ENCODE measurements at regions of chr6 and their contacts with region 1.

Region 1: DNA sequence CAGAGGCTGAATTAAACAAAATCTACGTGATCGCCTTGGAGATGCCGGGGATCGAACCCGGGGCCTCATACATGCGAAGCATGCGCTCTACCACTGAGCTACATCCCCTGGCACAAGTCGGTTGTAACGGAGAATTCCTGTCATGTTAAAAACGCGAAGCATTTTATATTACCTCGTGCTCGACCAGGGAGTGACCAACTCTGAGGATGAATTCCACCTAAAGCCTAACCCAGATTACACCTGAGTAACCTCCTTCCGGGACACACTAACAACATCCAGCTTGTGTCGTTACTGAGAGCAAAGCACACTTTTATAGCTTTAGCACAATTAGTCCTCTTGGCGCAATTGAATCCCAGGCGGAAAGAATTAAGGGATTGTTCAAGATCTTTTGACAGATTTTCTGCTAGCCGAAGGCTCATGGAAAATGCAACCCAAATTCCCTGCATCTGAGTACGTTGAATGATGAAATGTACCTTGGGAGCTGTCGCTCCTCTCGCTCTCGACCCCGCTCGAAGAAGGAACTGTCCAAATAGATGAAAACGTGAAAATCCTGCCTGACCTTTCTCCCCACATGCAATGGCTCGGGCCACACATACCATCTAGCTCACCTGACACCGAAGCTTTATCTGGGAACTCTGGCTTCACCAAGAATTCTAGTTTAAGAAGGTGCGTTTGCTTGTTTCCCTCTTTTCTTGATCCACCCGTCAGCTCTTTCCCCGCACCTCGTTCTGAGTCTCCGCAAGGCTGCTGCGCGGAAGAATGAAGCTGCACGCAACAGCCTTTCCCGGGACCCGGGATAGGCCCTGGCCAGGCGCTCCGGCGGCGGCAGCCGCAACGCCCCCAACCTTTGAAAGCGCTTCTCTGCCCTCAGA is 148.4 kb downstream of the GPX5 start:
- DNase-seq: peak; percentile 75
- ATAC-seq: peak; percentile 86
- H3K4me3 ChIP-seq: peak overlapping the region; percentile 46 to 70 (median 57)
- H3K27ac ChIP-seq: no peak overlapping the region
- H3K4me1 ChIP-seq: peaks cover 30% of the 10 kb centered on the region
- H3K27me3 ChIP-seq: no peaks in the 10 kb centered on the region; a peak in 1 of 5 replicates
- CTCF ChIP-seq: no peak
- EP300 ChIP-seq: no peak
- POLR2A ChIP-seq: no peak
- RAD21 ChIP-seq: no peak

Region 2: DNA sequence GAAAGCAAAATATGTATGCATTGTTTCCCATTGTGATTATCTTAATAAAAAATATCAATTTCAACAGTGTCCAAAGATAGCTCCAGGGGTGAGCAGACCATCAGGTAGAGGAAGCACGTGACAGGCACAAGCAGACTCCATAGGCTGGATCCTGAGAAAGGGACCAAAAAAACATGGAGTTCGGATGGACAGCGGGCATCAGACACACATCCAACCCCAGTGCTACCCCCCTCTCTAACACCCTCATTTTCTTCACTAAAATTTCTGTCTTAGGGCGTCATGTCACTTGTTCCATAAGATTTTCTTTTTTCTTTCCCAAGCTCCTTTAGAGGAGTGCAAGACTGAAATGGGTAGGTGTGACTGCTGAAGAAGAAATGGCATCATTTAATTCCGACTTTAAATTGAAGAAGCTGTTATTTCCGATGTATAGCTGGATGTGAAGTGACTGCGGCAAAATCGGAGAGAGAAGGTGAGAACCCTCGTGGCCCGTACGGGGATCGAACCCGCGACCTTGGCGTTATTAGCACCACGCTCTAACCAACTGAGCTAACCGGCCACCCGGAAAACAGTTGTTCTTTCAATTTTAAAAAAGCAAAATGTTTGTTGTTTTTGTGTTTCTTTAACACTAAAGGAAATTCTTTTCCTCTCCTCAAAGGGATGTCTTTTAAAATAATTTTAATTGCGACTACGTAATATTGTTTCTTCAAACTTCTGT is 1436.8 kb before region 1 on chr6:
- CTCF ChIA-PET with region 1: no interaction called
- POLR2A ChIA-PET with region 1: no interaction called
- in situ Hi-C with region 1: no loop called
- intact Hi-C with region 1: no loop called
- DNase-seq: peak; percentile 27
- ATAC-seq: peak; percentile 47
- H3K4me3 ChIP-seq: peak overlapping the region in 2 of 3 experiments; percentile 19 to 43; a peak in 2 of 6 replicates
- H3K27ac ChIP-seq: no peak overlapping the region
- H3K4me1 ChIP-seq: peaks cover 31% of the 10 kb centered on the region
- H3K27me3 ChIP-seq: no peaks in the 10 kb centered on the region
- CTCF ChIP-seq: no peak
- EP300 ChIP-seq: no peak
- POLR2A ChIP-seq: no peak
- RAD21 ChIP-seq: no peak

Region 3: GRCh38 chr6:28657769-28658465 is 16.1 kb before region 1 on chr6:
- CTCF ChIA-PET with region 1: no interaction called
- POLR2A ChIA-PET with region 1: no interaction called
- in situ Hi-C with region 1: no loop called
- intact Hi-C with region 1: loop called (anchors 2 kb)
- DNase-seq: peak; percentile 61
- ATAC-seq: peak; percentile 91
- H3K4me3 ChIP-seq: peak overlapping the region; percentile 59 to 72 (median 65)
- H3K27ac ChIP-seq: no peak overlapping the region
- H3K4me1 ChIP-seq: peaks cover 29% of the 10 kb centered on the region
- H3K27me3 ChIP-seq: peaks cover 1 to 16% of the 10 kb centered on the region in 2 experiments; a peak in 2 of 5 replicates
- CTCF ChIP-seq: no peak
- EP300 ChIP-seq: no peak
- POLR2A ChIP-seq: no peak
- RAD21 ChIP-seq: no peak

Region 4: DNA sequence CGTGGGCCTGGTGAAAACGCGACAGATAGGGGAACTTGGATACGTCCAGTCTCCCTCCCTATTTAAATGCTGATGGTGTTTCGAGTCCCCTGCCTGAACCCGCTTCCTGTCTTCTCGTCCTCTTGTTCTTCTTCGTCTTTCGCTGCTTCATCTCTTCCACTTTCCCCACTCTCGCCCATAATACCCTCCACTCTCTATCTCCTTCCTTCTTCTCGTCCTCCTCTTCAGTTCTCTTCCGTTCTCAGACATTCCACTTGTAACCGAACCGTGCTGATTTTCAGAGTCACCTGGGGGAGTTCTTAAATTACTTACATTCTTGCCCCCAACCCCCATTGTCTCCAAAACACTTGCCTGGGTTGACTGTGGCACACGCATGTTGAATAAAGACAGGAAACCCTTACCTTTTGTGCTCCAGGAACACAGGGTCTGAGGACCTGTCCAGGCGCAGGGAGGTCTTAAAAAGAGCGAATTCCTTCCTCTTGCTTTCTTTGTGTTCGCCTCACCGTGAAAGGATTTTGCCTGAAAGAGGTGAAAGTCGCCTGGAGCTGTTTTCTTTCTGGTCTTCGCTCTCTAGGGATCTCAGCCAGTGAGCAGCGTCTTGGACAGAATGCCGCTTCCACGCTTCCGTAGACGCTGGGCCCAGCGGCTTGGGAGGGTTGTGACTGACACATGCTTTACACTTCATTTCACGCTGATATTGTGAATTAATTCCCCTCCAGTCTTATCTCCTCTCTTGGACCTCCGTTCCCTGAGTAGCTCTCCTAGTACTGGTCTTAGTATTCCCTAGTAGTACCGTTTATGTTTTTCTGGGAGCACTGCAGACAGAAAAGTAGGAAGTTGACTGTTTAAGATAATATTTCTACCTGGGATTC is 35.7 kb after region 1 on chr6:
- CTCF ChIA-PET with region 1: no interaction called
- POLR2A ChIA-PET with region 1: no interaction called
- in situ Hi-C with region 1: no loop called
- intact Hi-C with region 1: loop called (anchors 1 kb)
- DNase-seq: no peak
- ATAC-seq: peak; percentile 43
- H3K4me3 ChIP-seq: peak overlapping the region; percentile 37 to 55 (median 44)
- H3K27ac ChIP-seq: no peak overlapping the region
- H3K4me1 ChIP-seq: peaks cover 20% of the 10 kb centered on the region
- H3K27me3 ChIP-seq: no peaks in the 10 kb centered on the region; a peak in 2 of 5 replicates
- CTCF ChIP-seq: no peak
- EP300 ChIP-seq: no peak
- POLR2A ChIP-seq: no peak
- RAD21 ChIP-seq: no peak

Region 5: GRCh38 chr6:29649701-29650673 is 976.0 kb after region 1 on chr6:
- CTCF ChIA-PET with region 1: no interaction called
- POLR2A ChIA-PET with region 1: no interaction called
- in situ Hi-C with region 1: no loop called
- intact Hi-C with region 1: no loop called
- DNase-seq: peak; percentile 96
- ATAC-seq: peak; percentile 96
- H3K4me3 ChIP-seq: peak overlapping the region; percentile 39 to 71 (median 43)
- H3K27ac ChIP-seq: no peak overlapping the region
- H3K4me1 ChIP-seq: peaks cover 6% of the 10 kb centered on the region; the same call in 1 of the 2 replicates
- H3K27me3 ChIP-seq: no peaks in the 10 kb centered on the region; a peak in 1 of 5 replicates
- CTCF ChIP-seq: peak; percentile 94
- EP300 ChIP-seq: no peak
- POLR2A ChIP-seq: peak; percentile 34 to 65; a peak in 1 of 4 replicates
- RAD21 ChIP-seq: no peak